PC-9 (cell line): ENCODE measurements at regions of chr2 and their contacts with region 1.

Region 1: DNA sequence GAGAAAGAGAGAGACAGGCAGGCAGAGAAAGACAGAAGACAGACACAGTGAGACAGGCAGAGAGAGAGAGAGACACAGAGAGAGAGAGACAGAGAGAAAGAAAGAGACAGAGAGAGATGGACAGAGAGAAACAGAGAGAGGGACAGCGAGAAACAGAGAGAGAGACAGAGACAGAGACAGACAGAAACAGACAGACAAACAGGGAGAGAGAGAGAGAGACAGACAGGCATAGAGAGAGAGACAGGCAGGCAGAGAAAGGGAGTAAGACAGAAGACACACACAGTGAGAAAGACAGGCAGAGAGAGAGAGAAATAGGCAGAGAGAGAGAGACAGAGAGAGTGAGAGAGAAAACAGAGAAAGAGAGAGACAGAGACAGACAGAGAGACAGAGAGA is 105.3 kb upstream of the ANKRD30BL start:
- DNase-seq: no peak
- H3K4me3 ChIP-seq: no peak overlapping the region
- H3K27ac ChIP-seq: no peak overlapping the region
- H3K4me1 ChIP-seq: peaks cover 7% of the 10 kb centered on the region; the same call in 1 of the 2 replicates
- H3K27me3 ChIP-seq: peaks cover 4% of the 10 kb centered on the region; the same call in 1 of the 2 replicates
- CTCF ChIP-seq: no peak

Region 2: GRCh38 chr2:132400169-132400900 is 133.2 kb after region 1 on chr2:
- CTCF ChIA-PET with region 1: no interaction called
- POLR2A ChIA-PET with region 1: no interaction called
- intact Hi-C with region 1: no loop called
- DNase-seq: peak in 1 of 2 experiments; percentile 91
- H3K4me3 ChIP-seq: no peak overlapping the region
- H3K27ac ChIP-seq: no peak overlapping the region
- H3K4me1 ChIP-seq: peaks cover 17% of the 10 kb centered on the region; the same call in 1 of the 2 replicates
- H3K27me3 ChIP-seq: no peaks in the 10 kb centered on the region
- CTCF ChIP-seq: no peak; the same call in 1 of the 2 replicates

Region 3: DNA sequence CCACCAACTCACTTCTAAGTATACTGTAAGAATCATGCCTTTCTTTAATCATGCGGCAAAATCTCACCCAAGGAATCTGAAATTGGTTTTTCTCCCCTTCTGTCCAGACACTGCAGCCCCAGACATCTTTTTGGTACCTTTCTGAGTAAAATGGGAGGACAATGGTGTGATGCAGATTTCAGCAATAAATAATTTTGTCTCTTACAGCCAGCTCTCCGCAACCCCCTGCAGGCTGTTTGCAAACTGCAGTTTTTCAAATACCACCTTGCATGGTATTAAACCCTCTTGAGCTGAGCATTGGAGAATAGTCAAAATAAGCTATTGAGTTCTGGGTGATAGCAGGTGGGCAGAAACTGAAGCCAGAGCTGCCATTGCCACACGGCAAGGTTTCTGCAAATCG is 181.7 kb after region 1 on chr2:
- CTCF ChIA-PET with region 1: no interaction called
- POLR2A ChIA-PET with region 1: no interaction called
- intact Hi-C with region 1: loop called (anchors 2 kb)
- DNase-seq: no peak
- H3K4me3 ChIP-seq: no peak overlapping the region
- H3K27ac ChIP-seq: no peak overlapping the region
- H3K4me1 ChIP-seq: no peaks in the 10 kb centered on the region
- H3K27me3 ChIP-seq: no peaks in the 10 kb centered on the region
- CTCF ChIP-seq: peak; percentile 72

Region 4: DNA sequence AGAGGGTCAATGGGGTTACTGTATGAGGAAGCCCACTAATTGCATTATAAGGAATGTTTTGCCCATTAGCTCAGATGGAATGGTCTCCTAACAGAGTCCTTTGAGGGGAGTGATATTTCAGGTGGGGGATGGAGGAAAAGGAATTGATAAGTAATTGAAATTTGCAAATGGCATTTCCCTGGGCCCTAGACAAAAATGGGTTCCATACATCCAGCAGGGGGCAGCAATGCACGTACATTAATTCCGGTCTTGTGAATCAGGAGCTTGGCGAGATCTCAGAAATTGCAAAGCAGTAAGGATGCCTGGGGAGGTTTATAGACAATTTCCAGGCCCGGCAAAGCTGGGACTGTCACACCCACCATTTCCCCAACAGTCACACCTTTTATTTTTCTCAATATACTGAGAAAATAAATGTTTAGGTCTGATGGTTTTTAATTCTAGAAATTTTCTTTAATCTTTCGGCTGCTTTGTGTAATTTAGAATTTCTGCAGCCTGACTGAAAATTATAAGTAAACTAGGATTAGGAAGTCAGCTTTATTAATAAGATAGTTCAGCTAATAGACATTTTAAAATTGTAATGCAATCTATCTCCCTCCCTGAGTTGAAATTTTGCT is 280.1 kb after region 1 on chr2:
- CTCF ChIA-PET with region 1: no interaction called
- POLR2A ChIA-PET with region 1: no interaction called
- intact Hi-C with region 1: loop called (anchors 10 kb)
- DNase-seq: peak in 1 of 2 experiments; percentile 41
- H3K4me3 ChIP-seq: no peak overlapping the region
- H3K27ac ChIP-seq: no peak overlapping the region
- H3K4me1 ChIP-seq: peaks cover 21% of the 10 kb centered on the region
- H3K27me3 ChIP-seq: no peaks in the 10 kb centered on the region
- CTCF ChIP-seq: peak; percentile 74

Region 5: GRCh38 chr2:133171393-133172004 is 904.4 kb after region 1 on chr2:
- CTCF ChIA-PET with region 1: interaction called, 9 read pairs
- POLR2A ChIA-PET with region 1: no interaction called
- intact Hi-C with region 1: loop called (anchors 1 kb)
- DNase-seq: peak in 1 of 2 experiments; percentile 1
- H3K4me3 ChIP-seq: no peak overlapping the region
- H3K27ac ChIP-seq: no peak overlapping the region
- H3K4me1 ChIP-seq: no peaks in the 10 kb centered on the region
- H3K27me3 ChIP-seq: no peaks in the 10 kb centered on the region
- CTCF ChIP-seq: peak; percentile 79